Dendritic cell treated with granulocyte-macrophage colony-stimulating factor and Interleukin-4, amounts not matched to agents 40 ng/mL and 50 ng/mL, for 4 days (primary cell): ENCODE measurements at regions of chr4 and their contacts with region 1.

Region 1: DNA sequence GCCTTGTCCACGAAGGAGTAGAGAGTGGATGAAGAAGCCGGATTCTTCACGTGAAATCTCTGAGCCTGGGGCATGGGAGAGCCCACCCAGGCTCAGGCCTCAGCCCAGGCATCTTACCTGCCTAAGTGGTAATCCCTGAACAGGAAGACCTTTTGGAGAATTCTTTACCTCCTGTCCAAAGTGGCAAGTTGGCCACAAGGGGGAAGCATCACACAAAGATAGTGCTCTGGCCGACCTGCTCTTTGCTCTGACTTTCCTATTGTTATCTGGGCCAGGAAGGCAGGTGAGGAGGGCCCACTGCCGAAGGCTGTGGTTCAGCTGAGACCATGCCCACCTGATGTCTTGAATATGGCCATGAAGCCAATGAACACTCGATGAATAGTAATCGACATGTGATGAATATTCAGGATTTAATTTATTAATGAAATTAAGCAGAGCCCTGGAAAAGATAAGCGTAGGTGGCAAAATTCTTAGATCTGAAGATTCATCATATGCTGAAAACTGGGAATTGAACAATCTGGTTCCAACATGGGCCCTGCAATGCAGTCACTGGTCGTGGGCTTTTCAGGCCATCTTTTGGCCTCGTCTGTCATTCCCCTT is 93.8 kb downstream of the PDGFRA start:
- H3K4me3 Mint-ChIP-seq: no peak overlapping the region
- H3K27ac Mint-ChIP-seq: no peak overlapping the region
- H3K4me1 Mint-ChIP-seq: peaks cover 14% of the 10 kb centered on the region
- H3K27me3 Mint-ChIP-seq: no peaks in the 10 kb centered on the region

Region 2: GRCh38 chr4:54289316-54289715 is 33.6 kb before region 1 on chr4:
- intact Hi-C with region 1: no loop called
- H3K4me3 Mint-ChIP-seq: no peak overlapping the region
- H3K27ac Mint-ChIP-seq: no peak overlapping the region
- H3K4me1 Mint-ChIP-seq: no peaks in the 10 kb centered on the region
- H3K27me3 Mint-ChIP-seq: no peaks in the 10 kb centered on the region

Region 3: GRCh38 chr4:54378461-54378860 is 55.5 kb after region 1 on chr4:
- intact Hi-C with region 1: no loop called
- H3K4me3 Mint-ChIP-seq: no peak overlapping the region
- H3K27ac Mint-ChIP-seq: no peak overlapping the region
- H3K4me1 Mint-ChIP-seq: no peaks in the 10 kb centered on the region
- H3K27me3 Mint-ChIP-seq: no peaks in the 10 kb centered on the region

Region 4: DNA sequence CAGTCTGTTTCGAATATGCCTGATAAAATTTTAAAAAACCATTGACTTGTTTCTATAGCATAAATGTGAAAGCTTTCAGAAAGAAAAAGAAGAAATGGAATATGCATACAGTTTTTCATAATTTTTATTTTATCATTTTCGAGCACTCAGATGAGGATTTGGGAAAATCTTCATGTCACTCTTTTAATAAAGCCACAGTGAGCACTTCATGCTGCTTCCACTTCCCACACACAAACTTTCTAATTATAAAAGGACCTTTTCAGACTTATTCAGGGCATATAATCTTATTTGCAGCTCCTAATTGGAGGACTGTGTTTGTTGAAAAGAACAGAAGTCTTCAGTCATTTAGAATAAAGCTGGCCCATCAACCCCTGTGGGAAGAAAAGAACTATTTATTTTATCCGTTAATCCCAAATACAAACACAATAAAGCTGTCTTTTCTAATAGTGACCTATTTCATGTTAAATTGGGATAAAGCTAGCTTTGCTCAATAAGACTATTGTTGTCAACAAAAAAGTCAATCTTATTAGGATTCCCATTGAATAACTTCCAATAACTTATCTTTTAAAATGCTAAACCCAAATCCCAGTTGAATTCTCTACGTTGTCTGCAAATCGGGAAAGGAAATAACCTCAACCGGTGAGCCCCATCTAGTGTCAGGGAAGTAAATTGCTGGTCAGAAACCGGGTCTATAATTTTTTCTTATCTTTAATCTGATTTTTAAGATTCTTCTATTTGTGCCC is 117.6 kb after region 1 on chr4:
- intact Hi-C with region 1: loop called (anchors 2 kb)
- H3K4me3 Mint-ChIP-seq: no peak overlapping the region
- H3K27ac Mint-ChIP-seq: no peak overlapping the region
- H3K4me1 Mint-ChIP-seq: peaks cover 13% of the 10 kb centered on the region
- H3K27me3 Mint-ChIP-seq: peaks cover 8% of the 10 kb centered on the region

Region 5: GRCh38 chr4:54683616-54684346 is 360.9 kb after region 1 on chr4:
- intact Hi-C with region 1: loop called (anchors 2 kb)
- H3K4me3 Mint-ChIP-seq: no peak overlapping the region
- H3K27ac Mint-ChIP-seq: no peak overlapping the region
- H3K4me1 Mint-ChIP-seq: peaks cover 21% of the 10 kb centered on the region
- H3K27me3 Mint-ChIP-seq: peaks cover 4% of the 10 kb centered on the region

Region 6: DNA sequence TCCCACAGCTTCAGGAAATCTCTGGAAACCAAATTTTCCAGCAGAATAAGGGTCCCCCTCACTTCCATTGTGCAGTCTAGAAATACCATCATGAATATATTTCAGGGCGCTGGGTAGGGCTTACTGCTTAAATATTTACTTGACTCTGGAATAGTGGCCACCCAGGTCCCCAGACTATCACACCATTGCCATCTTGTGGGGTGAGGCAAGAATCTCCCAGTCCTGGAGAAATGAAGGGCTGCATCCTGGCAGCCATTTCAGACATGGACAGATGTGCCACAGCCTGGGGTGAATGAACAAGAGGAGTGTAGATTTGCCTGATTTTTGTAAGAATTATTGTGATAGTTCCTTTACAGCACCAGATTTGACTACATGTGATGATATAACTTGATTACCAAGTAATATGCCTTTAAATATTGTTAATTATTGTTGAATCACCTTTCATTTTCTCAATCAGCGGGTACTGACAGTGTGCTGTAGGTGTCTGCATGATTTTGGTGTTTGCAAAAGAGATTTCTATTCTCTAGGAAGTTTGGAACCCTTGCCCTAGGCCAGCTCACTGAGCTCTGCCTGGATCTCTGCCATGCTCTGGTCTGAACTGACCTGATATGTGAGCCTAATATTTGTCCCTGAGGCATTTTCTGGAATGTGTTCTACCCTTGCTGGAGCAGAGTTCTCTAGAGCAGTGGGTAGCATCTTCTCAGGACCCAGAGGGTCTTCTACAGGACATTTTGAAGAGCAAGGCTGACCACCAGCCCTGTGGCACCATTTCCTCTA is 518.3 kb after region 1 on chr4:
- intact Hi-C with region 1: loop called (anchors 2 kb)
- H3K4me3 Mint-ChIP-seq: no peak overlapping the region
- H3K27ac Mint-ChIP-seq: no peak overlapping the region
- H3K4me1 Mint-ChIP-seq: peaks cover 6% of the 10 kb centered on the region
- H3K27me3 Mint-ChIP-seq: no peaks in the 10 kb centered on the region

Region 7: GRCh38 chr4:54961357-54961975 is 638.5 kb after region 1 on chr4:
- intact Hi-C with region 1: loop called (anchors 1 kb)
- H3K4me3 Mint-ChIP-seq: no peak overlapping the region
- H3K27ac Mint-ChIP-seq: no peak overlapping the region
- H3K4me1 Mint-ChIP-seq: no peaks in the 10 kb centered on the region
- H3K27me3 Mint-ChIP-seq: no peaks in the 10 kb centered on the region

Region 8: GRCh38 chr4:55321707-55322264 is 998.9 kb after region 1 on chr4:
- intact Hi-C with region 1: loop called (anchors 5 kb)
- H3K4me3 Mint-ChIP-seq: no peak overlapping the region
- H3K27ac Mint-ChIP-seq: no peak overlapping the region
- H3K4me1 Mint-ChIP-seq: peaks cover 6% of the 10 kb centered on the region
- H3K27me3 Mint-ChIP-seq: peaks cover 11% of the 10 kb centered on the region